ENCODE measurements at regions of chr11 and their contacts with region 1.

Region 1: DNA sequence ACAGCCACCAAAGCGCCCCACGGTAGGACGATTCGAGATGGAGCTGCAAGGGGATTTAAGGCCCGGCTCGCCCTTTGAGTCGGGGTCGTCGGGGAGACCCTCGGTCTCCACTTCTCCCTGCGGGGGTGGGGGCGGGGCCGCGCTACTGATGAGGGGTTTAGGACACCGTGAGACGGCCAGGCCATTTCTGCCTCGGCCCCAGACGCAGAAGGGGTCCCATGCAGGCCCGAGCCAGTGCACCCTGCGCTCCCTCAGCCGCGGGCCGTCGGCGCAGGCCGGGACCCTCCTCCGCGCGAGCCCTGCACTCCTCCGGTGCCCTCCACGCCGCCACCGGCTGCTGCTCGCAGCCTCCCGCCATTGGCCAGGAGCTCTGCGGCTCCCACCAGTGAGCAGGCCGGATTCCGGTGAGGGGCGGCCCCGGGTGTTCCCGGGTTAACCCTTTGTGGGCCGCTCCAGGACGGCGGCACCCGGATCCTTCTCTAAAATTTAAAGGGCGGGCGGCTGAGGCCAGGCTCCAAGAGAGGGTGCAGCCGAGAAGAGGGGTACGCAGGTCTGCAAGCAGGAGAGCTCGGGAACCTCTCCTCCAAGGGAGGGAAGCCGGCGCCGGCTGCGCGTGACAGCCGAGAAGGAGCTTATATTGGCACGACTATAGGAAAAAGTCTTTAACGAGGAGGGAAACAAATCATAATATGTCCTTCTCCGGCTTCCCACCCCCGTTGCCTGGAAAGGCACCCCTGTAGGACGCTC is 18.0 kb downstream of the CREB3L1 start:
- DNase-seq: peak; percentile 91
- H3K4me3 ChIP-seq: peak overlapping the region; percentile 25 to 63 (median 54)
- H3K27ac ChIP-seq: peak overlapping the region; percentile 45 to 75 (median 62)
- H3K4me1 ChIP-seq: peaks cover 0 to 54% (median 49%) of the 10 kb centered on the region in 4 donors
- H3K27me3 ChIP-seq: no peaks in the 10 kb centered on the region
- CTCF ChIP-seq: no peak
- EP300 ChIP-seq: peak in 1 of 4 donors; percentile 41
- POLR2A ChIP-seq: no peak

Region 2: DNA sequence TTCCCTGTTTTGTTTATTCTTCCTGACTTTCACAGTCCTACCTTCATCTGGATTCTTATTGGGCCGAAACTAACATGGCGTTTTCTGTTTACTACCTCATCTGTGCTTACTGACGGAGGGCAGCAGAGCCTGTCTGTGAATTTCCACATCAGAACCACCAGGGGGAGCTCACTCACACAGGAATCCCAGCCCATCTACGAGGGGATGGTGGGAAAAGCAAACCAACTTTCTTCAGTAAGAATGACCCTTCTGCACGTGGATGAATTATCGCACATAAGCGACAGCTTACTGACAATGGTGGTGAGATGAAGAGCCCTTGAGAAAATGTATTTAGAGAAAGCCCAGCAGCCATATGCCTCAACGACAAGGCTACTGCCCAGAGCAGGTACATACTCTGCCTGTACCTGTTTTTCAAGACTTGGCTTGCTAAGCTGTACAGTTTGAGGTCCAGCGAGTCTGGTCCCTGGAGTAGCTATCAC is 330.5 kb before region 1 on chr11:
- intact Hi-C with region 1: loop called (anchors 10 kb)
- DNase-seq: peak; percentile 82
- H3K4me3 ChIP-seq: no peak overlapping the region
- H3K27ac ChIP-seq: peak overlapping the region in 3 of 4 donors; percentile 24 to 47 (median 31)
- H3K4me1 ChIP-seq: peaks cover 0 to 7% (median 3%) of the 10 kb centered on the region in 4 donors
- H3K27me3 ChIP-seq: no peaks in the 10 kb centered on the region
- CTCF ChIP-seq: peak; percentile 80 to 91 (median 84)
- EP300 ChIP-seq: no peak
- POLR2A ChIP-seq: no peak

Region 3: DNA sequence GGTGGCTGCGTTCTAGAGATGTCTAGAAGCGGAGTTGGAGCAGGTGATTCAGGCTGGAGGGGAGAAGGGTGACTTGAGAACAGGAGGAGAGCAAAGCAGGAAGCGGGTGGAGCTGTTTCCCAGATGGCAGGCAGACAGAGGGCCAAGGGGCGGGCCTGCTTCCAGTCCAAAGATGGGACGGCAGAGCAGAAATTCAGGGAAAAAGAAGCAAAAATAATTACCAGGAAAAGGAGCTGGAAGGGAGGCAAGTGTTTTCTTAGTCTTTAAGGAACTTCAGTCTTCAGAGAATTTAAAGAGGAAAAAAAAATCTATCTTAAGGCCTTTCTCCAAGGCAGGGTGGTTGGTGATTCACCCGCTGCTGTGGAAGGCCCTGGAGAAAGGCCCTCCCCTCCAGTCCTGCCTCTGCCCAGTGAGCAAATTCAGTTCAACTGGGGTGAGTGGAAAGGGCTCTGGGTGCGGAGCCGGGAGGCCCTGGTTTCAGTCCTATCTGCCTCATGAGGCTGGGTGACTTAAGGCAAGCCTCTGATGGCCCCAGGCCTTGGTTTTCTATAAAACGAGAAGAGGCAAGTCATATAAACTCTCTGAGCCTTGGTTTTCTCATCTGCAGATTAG is 22.6 kb before region 1 on chr11:
- intact Hi-C with region 1: loop called (anchors 2 kb)
- DNase-seq: peak; percentile 85
- H3K4me3 ChIP-seq: no peak overlapping the region
- H3K27ac ChIP-seq: peak overlapping the region; percentile 68 to 86 (median 84)
- H3K4me1 ChIP-seq: peaks cover 0 to 68% (median 65%) of the 10 kb centered on the region in 4 donors
- H3K27me3 ChIP-seq: peaks cover 0 to 16% (median 0%) of the 10 kb centered on the region in 3 donors
- CTCF ChIP-seq: no peak
- EP300 ChIP-seq: no peak
- POLR2A ChIP-seq: no peak

Measured in sigmoid colon (tissue), 7 donors.